HepG2 (cell line): ENCODE measurements at regions of chr17 and their contacts with region 1.

Region 1: GRCh38 chr17:36008998-36009665 is 7.8 kb upstream of the CCL15 start:
- DNase-seq: peak; percentile 48
- ATAC-seq: peak; percentile 91
- H3K4me3 ChIP-seq: no peak overlapping the region
- H3K27ac ChIP-seq: no peak overlapping the region
- H3K4me1 ChIP-seq: peaks cover 49% of the 10 kb centered on the region
- H3K27me3 ChIP-seq: no peaks in the 10 kb centered on the region
- CTCF ChIP-seq: peak; percentile 71
- EP300 ChIP-seq: no peak
- POLR2A ChIP-seq: no peak
- RAD21 ChIP-seq: peak; percentile 80

Region 2: GRCh38 chr17:35898283-35899070 is 110.7 kb before region 1 on chr17:
- CTCF ChIA-PET with region 1: no interaction called
- POLR2A ChIA-PET with region 1: no interaction called
- in situ Hi-C with region 1: no loop called
- intact Hi-C with region 1: no loop called
- DNase-seq: no peak
- ATAC-seq: no peak
- H3K4me3 ChIP-seq: no peak overlapping the region
- H3K27ac ChIP-seq: no peak overlapping the region
- H3K4me1 ChIP-seq: no peaks in the 10 kb centered on the region
- H3K27me3 ChIP-seq: peaks cover 1 to 3% of the 10 kb centered on the region in 2 experiments; a peak in 2 of 5 replicates
- CTCF ChIP-seq: no peak
- EP300 ChIP-seq: no peak
- POLR2A ChIP-seq: no peak
- RAD21 ChIP-seq: no peak

Region 3: GRCh38 chr17:35981908-35982330 is 27.2 kb before region 1 on chr17:
- CTCF ChIA-PET with region 1: interaction called, 18 read pairs
- POLR2A ChIA-PET with region 1: interaction called, 50 read pairs
- in situ Hi-C with region 1: no loop called
- intact Hi-C with region 1: no loop called
- DNase-seq: peak; percentile 75
- ATAC-seq: peak; percentile 86
- H3K4me3 ChIP-seq: peak overlapping the region in 1 of 3 experiments; percentile 65; a peak in 2 of 6 replicates
- H3K27ac ChIP-seq: peak overlapping the region; percentile 66
- H3K4me1 ChIP-seq: peaks cover 78% of the 10 kb centered on the region
- H3K27me3 ChIP-seq: no peaks in the 10 kb centered on the region; a peak in 1 of 5 replicates
- CTCF ChIP-seq: peak; percentile 87
- EP300 ChIP-seq: peak in 1 of 2 experiments; percentile 48; a peak in 1 of 4 replicates
- POLR2A ChIP-seq: no peak
- RAD21 ChIP-seq: peak; percentile 88

Region 4: DNA sequence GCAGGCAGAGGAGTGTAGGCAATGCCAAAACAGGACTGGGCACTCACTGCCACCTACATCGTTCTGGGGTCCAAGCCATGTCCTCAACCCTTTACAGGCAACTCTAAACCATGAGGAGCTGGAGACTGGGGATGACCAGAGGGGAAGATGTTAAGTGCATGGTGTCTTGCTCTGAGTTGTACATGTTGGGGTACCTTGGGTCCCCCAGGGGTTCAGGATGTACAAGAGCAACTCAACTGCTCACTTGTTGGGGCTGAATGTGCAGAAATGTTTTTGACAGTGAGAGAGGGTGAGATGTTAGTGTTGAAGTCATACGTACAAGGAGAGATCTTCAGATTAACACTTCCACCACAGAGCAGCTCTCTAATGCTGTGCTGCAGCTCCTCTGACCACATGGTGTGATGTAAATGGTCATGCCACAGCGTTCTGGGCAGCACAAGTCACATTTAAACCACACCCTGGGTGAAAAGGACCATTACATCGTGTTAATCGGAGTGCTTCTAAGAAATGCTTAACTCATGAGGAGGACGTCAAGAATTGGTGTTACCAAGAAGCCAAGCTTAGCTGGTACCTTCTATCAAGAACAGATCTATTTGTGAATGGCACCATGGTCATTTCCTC is 57.3 kb after region 1 on chr17:
- CTCF ChIA-PET with region 1: no interaction called
- POLR2A ChIA-PET with region 1: no interaction called
- in situ Hi-C with region 1: loop called (anchors 10 kb)
- intact Hi-C with region 1: no loop called
- DNase-seq: no peak
- ATAC-seq: no peak
- H3K4me3 ChIP-seq: no peak overlapping the region
- H3K27ac ChIP-seq: no peak overlapping the region
- H3K4me1 ChIP-seq: no peaks in the 10 kb centered on the region
- H3K27me3 ChIP-seq: peaks cover 0 to 8% of the 10 kb centered on the region in 2 experiments; a peak in 1 of 5 replicates
- CTCF ChIP-seq: no peak
- EP300 ChIP-seq: no peak
- POLR2A ChIP-seq: no peak
- RAD21 ChIP-seq: no peak

Region 5: GRCh38 chr17:36072431-36073121 is 63.4 kb after region 1 on chr17:
- CTCF ChIA-PET with region 1: no interaction called
- POLR2A ChIA-PET with region 1: no interaction called
- in situ Hi-C with region 1: loop called (anchors 10 kb)
- intact Hi-C with region 1: loop called (anchors 2 kb)
- DNase-seq: peak; percentile 52
- ATAC-seq: peak; percentile 77
- H3K4me3 ChIP-seq: no peak overlapping the region
- H3K27ac ChIP-seq: no peak overlapping the region
- H3K4me1 ChIP-seq: no peaks in the 10 kb centered on the region
- H3K27me3 ChIP-seq: peaks cover 0 to 16% of the 10 kb centered on the region in 2 experiments; a peak in 2 of 5 replicates
- CTCF ChIP-seq: peak; percentile 81
- EP300 ChIP-seq: no peak
- POLR2A ChIP-seq: no peak
- RAD21 ChIP-seq: peak; percentile 65; the same call in 1 of the 2 replicates

Region 6: GRCh38 chr17:36707904-36708303 is 698.8 kb after region 1 on chr17:
- CTCF ChIA-PET with region 1: no interaction called
- POLR2A ChIA-PET with region 1: no interaction called
- in situ Hi-C with region 1: no loop called
- intact Hi-C with region 1: no loop called
- DNase-seq: no peak
- ATAC-seq: no peak
- H3K4me3 ChIP-seq: no peak overlapping the region
- H3K27ac ChIP-seq: no peak overlapping the region
- H3K4me1 ChIP-seq: no peaks in the 10 kb centered on the region
- H3K27me3 ChIP-seq: 0 out of 5 replicates have a peak, but pooled peaks cover 0 to 2% of the 10 kb centered on the region in 2 experiments
- CTCF ChIP-seq: no peak
- EP300 ChIP-seq: no peak
- POLR2A ChIP-seq: no peak
- RAD21 ChIP-seq: no peak